Motor neuron (in vitro differentiated cells): ENCODE measurements at regions of chr10 and their contacts with region 1.

Region 1: DNA sequence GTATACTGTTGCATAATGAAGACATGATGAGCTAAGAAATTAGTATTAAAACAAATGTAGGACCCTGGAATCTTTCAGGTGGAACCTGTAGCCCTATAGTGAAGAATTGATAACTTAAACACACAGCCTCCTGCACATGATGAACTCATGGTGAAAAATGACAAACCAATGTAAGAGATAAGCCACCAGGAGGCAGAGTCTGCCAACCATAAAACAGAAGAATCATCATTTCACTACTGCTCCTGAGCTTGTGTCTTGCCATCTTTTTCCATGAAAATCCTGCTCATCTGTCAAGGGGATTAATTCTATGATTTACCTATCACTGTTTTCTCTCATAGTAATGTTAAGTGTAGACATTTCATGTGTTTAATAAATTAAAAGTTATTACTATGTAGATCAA is 363.9 kb downstream of the MALRD1 start:
- ATAC-seq: peak in 4 of 8 experiments; percentile 34 to 62 (median 54)
- H3K4me3 ChIP-seq: no peak overlapping the region
- H3K27ac ChIP-seq: no peak overlapping the region
- H3K4me1 ChIP-seq: no peaks in the 10 kb centered on the region

Region 2: GRCh38 chr10:19097151-19097550 is 315.4 kb before region 1 on chr10:
- in situ Hi-C with region 1: no loop called
- ATAC-seq: no peak
- H3K4me3 ChIP-seq: no peak overlapping the region
- H3K27ac ChIP-seq: no peak overlapping the region
- H3K4me1 ChIP-seq: peaks cover 2 to 6% of the 10 kb centered on the region in 2 donors

Region 3: GRCh38 chr10:19803676-19804075 is 391.1 kb after region 1 on chr10:
- in situ Hi-C with region 1: loop called in 1 of 9 experiments (anchors 10 kb)
- ATAC-seq: no peak
- H3K4me3 ChIP-seq: no peak overlapping the region
- H3K27ac ChIP-seq: no peak overlapping the region
- H3K4me1 ChIP-seq: no peaks in the 10 kb centered on the region

Region 4: GRCh38 chr10:20768843-20769242 is 1356.3 kb after region 1 on chr10:
- in situ Hi-C with region 1: loop called in 1 of 9 experiments (anchors 25 kb)
- ATAC-seq: peak in 1 of 8 experiments; percentile 36
- H3K4me3 ChIP-seq: no peak overlapping the region
- H3K27ac ChIP-seq: no peak overlapping the region
- H3K4me1 ChIP-seq: no peaks in the 10 kb centered on the region